K562 (cell line): ENCODE measurements at regions of chr1 and their contacts with region 1.

Region 1: DNA sequence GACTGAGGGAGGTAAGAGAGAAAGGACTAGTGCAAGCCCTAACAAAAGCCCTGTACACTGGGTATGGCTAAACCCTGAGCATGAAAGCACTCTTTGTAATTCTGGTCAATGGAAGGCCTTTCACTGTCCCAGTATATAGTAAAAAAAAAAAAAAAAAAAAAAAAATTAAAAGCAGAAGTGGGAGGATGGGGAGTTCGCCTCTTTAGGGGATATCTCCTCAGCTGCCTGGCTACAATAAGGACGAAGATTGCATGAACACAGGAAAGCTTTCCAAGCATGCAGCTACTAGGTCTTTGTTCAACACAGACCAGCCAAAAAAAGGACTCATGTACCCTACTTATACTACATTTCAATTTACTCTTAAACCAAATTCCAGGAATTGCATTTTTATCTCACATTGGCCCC is 59.1 kb downstream of the EIF4G3 start:
- DNase-seq: peak in 3 of 4 experiments; percentile 17 to 36 (median 32)
- ATAC-seq: peak; percentile 69
- H3K4me3 ChIP-seq: no peak overlapping the region
- H3K27ac ChIP-seq: peak overlapping the region; percentile 4; the same call in 1 of the 3 replicates
- H3K4me1 ChIP-seq: peaks cover 0 to 9% of the 10 kb centered on the region in 2 experiments; a peak in 2 of 5 replicates
- H3K27me3 ChIP-seq: no peaks in the 10 kb centered on the region
- CTCF ChIP-seq: no peak
- EP300 ChIP-seq: no peak
- POLR2A ChIP-seq: no peak
- RAD21 ChIP-seq: no peak

Region 2: GRCh38 chr1:20786253-20787028 is 331.2 kb before region 1 on chr1:
- CTCF ChIA-PET with region 1: no interaction called
- POLR2A ChIA-PET with region 1: no interaction called
- in situ Hi-C with region 1: no loop called
- intact Hi-C with region 1: no loop called
- DNase-seq: peak; percentile 95 to 98 (median 98)
- ATAC-seq: peak; percentile 90
- H3K4me3 ChIP-seq: peak overlapping the region; percentile 99
- H3K27ac ChIP-seq: peak overlapping the region; percentile 99
- H3K4me1 ChIP-seq: peaks cover 18 to 26% of the 10 kb centered on the region in 2 experiments
- H3K27me3 ChIP-seq: no peaks in the 10 kb centered on the region
- CTCF ChIP-seq: peak in 1 of 3 experiments; percentile 17; a peak in 2 of 6 replicates
- EP300 ChIP-seq: no peak
- POLR2A ChIP-seq: peak; percentile 90
- RAD21 ChIP-seq: no peak

Region 3: DNA sequence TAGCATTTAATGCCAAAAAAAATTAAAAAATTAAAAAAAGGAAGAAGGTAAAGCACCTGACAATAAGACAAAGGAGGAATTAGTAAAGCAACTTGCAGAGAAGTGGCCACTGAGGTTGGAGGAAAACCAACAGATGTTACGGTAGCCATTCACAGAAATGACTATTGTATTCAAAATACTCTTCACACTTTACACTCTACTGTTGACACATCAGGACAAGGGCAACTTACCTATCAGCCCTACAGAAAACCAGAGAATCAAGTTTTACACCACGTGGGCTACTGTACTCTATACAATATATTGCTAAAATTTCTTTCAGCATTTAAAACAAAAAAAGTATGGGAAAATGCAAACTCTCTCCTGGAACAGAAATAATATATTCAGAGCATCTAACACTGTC is 10.9 kb before region 1 on chr1:
- CTCF ChIA-PET with region 1: no interaction called
- POLR2A ChIA-PET with region 1: interaction called, 13 read pairs
- in situ Hi-C with region 1: no loop called
- intact Hi-C with region 1: no loop called
- DNase-seq: no peak
- ATAC-seq: no peak
- H3K4me3 ChIP-seq: no peak overlapping the region
- H3K27ac ChIP-seq: no peak overlapping the region
- H3K4me1 ChIP-seq: no peaks in the 10 kb centered on the region
- H3K27me3 ChIP-seq: no peaks in the 10 kb centered on the region
- CTCF ChIP-seq: no peak
- EP300 ChIP-seq: no peak
- POLR2A ChIP-seq: no peak
- RAD21 ChIP-seq: no peak

Region 4: GRCh38 chr1:21255278-21255942 is 137.8 kb after region 1 on chr1:
- CTCF ChIA-PET with region 1: no interaction called
- POLR2A ChIA-PET with region 1: no interaction called
- in situ Hi-C with region 1: no loop called
- intact Hi-C with region 1: no loop called
- DNase-seq: peak; percentile 76 to 90 (median 80)
- ATAC-seq: peak; percentile 96
- H3K4me3 ChIP-seq: no peak overlapping the region
- H3K27ac ChIP-seq: no peak overlapping the region
- H3K4me1 ChIP-seq: peaks cover 0 to 6% of the 10 kb centered on the region in 2 experiments; a peak in 2 of 5 replicates
- H3K27me3 ChIP-seq: no peaks in the 10 kb centered on the region
- CTCF ChIP-seq: peak; percentile 92 to 98 (median 96)
- EP300 ChIP-seq: no peak
- POLR2A ChIP-seq: no peak
- RAD21 ChIP-seq: peak; percentile 98 to 99